Mammary epithelial cell (primary cell): ENCODE measurements at regions of chr14 and their contacts with region 1.

Region 1: GRCh38 chr14:23494223-23494622 is 24.7 kb downstream of the NGDN start:
- DNase-seq: no peak
- H3K4me3 ChIP-seq: no peak overlapping the region
- H3K27ac ChIP-seq: no peak overlapping the region
- H3K4me1 ChIP-seq: no peaks in the 10 kb centered on the region
- H3K27me3 ChIP-seq: no peaks in the 10 kb centered on the region
- CTCF ChIP-seq: no peak

Region 2: GRCh38 chr14:22870811-22871223 is 623.4 kb before region 1 on chr14:
- CTCF ChIA-PET with region 1: no interaction called
- dilution Hi-C with region 1: no loop called
- in situ Hi-C with region 1: no loop called
- intact Hi-C with region 1: no loop called
- DNase-seq: no peak
- H3K4me3 ChIP-seq: peak overlapping the region; percentile 36 to 85 (median 40)
- H3K27ac ChIP-seq: peak overlapping the region; percentile 85
- H3K4me1 ChIP-seq: peaks cover 12% of the 10 kb centered on the region
- H3K27me3 ChIP-seq: no peaks in the 10 kb centered on the region
- CTCF ChIP-seq: no peak

Region 3: GRCh38 chr14:23392613-23393012 is 101.6 kb before region 1 on chr14:
- CTCF ChIA-PET with region 1: no interaction called
- dilution Hi-C with region 1: loop called (anchors 5 kb)
- in situ Hi-C with region 1: no loop called
- intact Hi-C with region 1: no loop called
- DNase-seq: no peak
- H3K4me3 ChIP-seq: no peak overlapping the region
- H3K27ac ChIP-seq: no peak overlapping the region
- H3K4me1 ChIP-seq: no peaks in the 10 kb centered on the region
- H3K27me3 ChIP-seq: no peaks in the 10 kb centered on the region
- CTCF ChIP-seq: no peak